ENCODE measurements at regions of chr15 and their contacts with region 1.

Region 1: DNA sequence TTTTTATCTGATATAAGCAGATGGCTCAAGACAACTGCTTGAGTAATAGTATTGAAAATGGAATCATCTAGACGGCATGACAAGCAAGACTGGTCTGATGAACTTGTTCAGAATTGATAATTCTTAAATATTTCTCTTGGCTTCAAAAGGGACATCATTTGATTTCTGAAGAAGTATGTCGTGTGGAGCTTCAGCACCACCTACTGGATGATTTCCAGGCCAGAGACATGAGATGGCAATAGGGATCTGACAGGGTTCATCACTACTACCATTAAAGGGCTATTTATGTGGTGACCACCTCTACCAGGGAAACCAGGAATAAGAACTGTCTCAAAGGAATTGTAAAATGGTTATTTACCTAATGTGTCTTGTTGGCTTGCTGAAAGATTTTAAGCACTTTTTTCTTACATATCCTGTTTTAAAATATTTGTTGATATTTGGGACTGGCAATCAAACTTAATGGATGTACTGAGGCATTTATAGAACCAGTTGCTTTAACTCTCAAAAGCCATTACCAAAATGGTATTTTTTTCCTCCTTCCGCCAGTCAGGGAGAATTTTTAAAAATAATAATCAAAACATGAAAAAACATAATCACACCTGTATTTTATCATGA is 99.5 kb upstream of the FAM98B start:
- DNase-seq: peak in 4 of 5 donors; percentile 44 to 80 (median 68)
- H3K4me3 ChIP-seq: no peak overlapping the region
- H3K27ac ChIP-seq: no peak overlapping the region
- H3K4me1 ChIP-seq: no peaks in the 10 kb centered on the region
- H3K27me3 ChIP-seq: no peaks in the 10 kb centered on the region
- CTCF ChIP-seq: peak; percentile 92

Region 2: DNA sequence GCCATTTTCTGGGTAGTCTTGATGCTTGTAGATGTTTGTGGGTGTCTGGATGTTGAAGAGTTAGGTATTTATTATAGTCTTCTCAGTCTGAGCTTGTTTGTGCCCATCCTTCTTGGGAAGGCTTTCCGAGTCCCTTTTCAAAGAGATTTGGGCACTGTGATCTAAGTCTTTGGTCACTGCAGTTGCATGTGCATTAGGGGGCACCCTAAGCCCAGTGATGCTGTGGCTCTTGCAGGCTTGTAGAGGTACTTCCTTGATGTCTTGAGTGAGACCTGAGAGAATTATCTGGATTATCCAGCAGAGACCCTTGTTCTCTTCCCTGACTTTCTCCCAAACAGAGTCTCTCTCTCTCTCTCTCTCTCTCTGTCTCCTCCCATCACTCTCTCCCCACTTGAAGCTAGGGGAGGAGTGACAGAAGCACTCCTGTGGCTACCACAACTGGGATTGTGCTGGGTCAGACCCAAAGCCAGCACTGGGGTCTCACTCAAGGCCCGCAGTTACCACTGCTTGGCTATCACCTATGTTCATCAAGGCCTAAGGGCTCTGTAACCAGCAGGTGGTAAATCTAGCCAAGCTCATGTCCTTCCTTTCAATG is 351.4 kb before region 1 on chr15:
- intact Hi-C with region 1: loop called (anchors 5 kb)
- DNase-seq: peak in 3 of 5 donors; percentile 38 to 62 (median 43)
- H3K4me3 ChIP-seq: no peak overlapping the region
- H3K27ac ChIP-seq: no peak overlapping the region
- H3K4me1 ChIP-seq: no peaks in the 10 kb centered on the region
- H3K27me3 ChIP-seq: no peaks in the 10 kb centered on the region
- CTCF ChIP-seq: peak; percentile 80